CD8-positive, alpha-beta T cell (primary cell): ENCODE measurements at regions of chr1 and their contacts with region 1.

Region 1: DNA sequence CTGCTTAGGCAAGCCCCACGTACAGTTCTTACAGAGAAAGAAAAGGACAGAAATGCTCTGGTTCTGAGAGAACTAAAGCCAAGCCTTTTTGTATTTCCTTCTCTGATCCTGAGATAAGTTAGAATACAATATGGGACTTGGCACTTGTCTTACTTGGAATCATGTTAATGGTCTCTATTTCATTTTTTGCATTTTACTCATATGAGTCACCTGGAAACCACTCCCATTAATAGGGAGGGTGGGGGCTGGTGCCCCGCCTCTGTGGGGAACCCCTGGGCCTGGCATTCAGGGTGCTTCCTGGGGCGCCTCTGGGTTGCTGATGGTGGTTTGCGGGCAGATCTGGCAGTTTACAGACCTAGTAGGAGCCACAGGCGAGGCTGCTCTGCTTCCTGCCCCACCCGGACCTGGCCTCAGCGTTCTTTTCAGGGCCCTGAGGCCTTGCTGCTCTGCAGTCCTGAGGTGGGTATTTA is 26.7 kb downstream of the TSPAN2 start:
- DNase-seq: peak; percentile 91 to 99 (median 94)
- ATAC-seq: peak; percentile 89
- H3K4me3 ChIP-seq: peak overlapping the region in 1 of 2 experiments; percentile 17
- H3K4me3 Mint-ChIP-seq: peak overlapping the region; percentile 79
- H3K27ac ChIP-seq: peak overlapping the region; percentile 74 to 93
- H3K27ac Mint-ChIP-seq: peak overlapping the region; percentile 100
- H3K4me1 ChIP-seq: peaks cover 35% of the 10 kb centered on the region
- H3K4me1 Mint-ChIP-seq: peaks cover 43% of the 10 kb centered on the region
- H3K27me3 ChIP-seq: no peaks in the 10 kb centered on the region
- H3K27me3 Mint-ChIP-seq: no peaks in the 10 kb centered on the region
- CTCF ChIP-seq: no peak

Region 2: GRCh38 chr1:114062477-114063099 is 1000.0 kb before region 1 on chr1:
- CTCF ChIA-PET with region 1: no interaction called
- POLR2A ChIA-PET with region 1: no interaction called
- intact Hi-C with region 1: no loop called
- DNase-seq: no peak
- ATAC-seq: no peak
- H3K4me3 ChIP-seq: no peak overlapping the region
- H3K4me3 Mint-ChIP-seq: no peak overlapping the region
- H3K27ac ChIP-seq: no peak overlapping the region
- H3K27ac Mint-ChIP-seq: no peak overlapping the region
- H3K4me1 ChIP-seq: no peaks in the 10 kb centered on the region
- H3K4me1 Mint-ChIP-seq: no peaks in the 10 kb centered on the region
- H3K27me3 ChIP-seq: no peaks in the 10 kb centered on the region
- H3K27me3 Mint-ChIP-seq: peaks cover 9% of the 10 kb centered on the region
- CTCF ChIP-seq: no peak

Region 3: GRCh38 chr1:115089420-115090185 is 27.0 kb after region 1 on chr1 and contains the start of gene TSPAN2:
- CTCF ChIA-PET with region 1: interaction called, 4 read pairs
- POLR2A ChIA-PET with region 1: no interaction called
- intact Hi-C with region 1: loop called (anchors 1 to 2 kb)
- DNase-seq: peak; percentile 34 to 77 (median 59)
- ATAC-seq: peak; percentile 89
- H3K4me3 ChIP-seq: peak within 1 kb of the TSS; percentile 67 to 82
- H3K4me3 Mint-ChIP-seq: peak within 1 kb of the TSS; percentile 84
- H3K27ac ChIP-seq: peak within 1 kb of the TSS; percentile 7 to 54
- H3K27ac Mint-ChIP-seq: peak within 1 kb of the TSS; percentile 78
- H3K4me1 ChIP-seq: peaks cover 16% of the 10 kb centered on the region
- H3K4me1 Mint-ChIP-seq: peaks cover 41% of the 10 kb centered on the region
- H3K27me3 ChIP-seq: no peaks in the 10 kb centered on the region
- H3K27me3 Mint-ChIP-seq: no peaks in the 10 kb centered on the region
- CTCF ChIP-seq: no peak
- total RNA-seq, gene TSPAN2: 0.43 to 0.72 TPM

Region 4: GRCh38 chr1:115098979-115099692 is 36.6 kb after region 1 on chr1:
- CTCF ChIA-PET with region 1: interaction called, 4 read pairs
- POLR2A ChIA-PET with region 1: interaction called, 5 read pairs
- intact Hi-C with region 1: loop called (anchors 1 kb)
- DNase-seq: peak; percentile 55 to 96 (median 74)
- ATAC-seq: peak; percentile 89
- H3K4me3 ChIP-seq: peak overlapping the region; percentile 51 to 56
- H3K4me3 Mint-ChIP-seq: peak overlapping the region; percentile 86
- H3K27ac ChIP-seq: peak overlapping the region; percentile 95
- H3K27ac Mint-ChIP-seq: peak overlapping the region; percentile 97
- H3K4me1 ChIP-seq: peaks cover 27% of the 10 kb centered on the region
- H3K4me1 Mint-ChIP-seq: peaks cover 36% of the 10 kb centered on the region
- H3K27me3 ChIP-seq: no peaks in the 10 kb centered on the region
- H3K27me3 Mint-ChIP-seq: no peaks in the 10 kb centered on the region
- CTCF ChIP-seq: no peak